ENCODE measurements at regions of chr11 and their contacts with region 1.

Region 1: DNA sequence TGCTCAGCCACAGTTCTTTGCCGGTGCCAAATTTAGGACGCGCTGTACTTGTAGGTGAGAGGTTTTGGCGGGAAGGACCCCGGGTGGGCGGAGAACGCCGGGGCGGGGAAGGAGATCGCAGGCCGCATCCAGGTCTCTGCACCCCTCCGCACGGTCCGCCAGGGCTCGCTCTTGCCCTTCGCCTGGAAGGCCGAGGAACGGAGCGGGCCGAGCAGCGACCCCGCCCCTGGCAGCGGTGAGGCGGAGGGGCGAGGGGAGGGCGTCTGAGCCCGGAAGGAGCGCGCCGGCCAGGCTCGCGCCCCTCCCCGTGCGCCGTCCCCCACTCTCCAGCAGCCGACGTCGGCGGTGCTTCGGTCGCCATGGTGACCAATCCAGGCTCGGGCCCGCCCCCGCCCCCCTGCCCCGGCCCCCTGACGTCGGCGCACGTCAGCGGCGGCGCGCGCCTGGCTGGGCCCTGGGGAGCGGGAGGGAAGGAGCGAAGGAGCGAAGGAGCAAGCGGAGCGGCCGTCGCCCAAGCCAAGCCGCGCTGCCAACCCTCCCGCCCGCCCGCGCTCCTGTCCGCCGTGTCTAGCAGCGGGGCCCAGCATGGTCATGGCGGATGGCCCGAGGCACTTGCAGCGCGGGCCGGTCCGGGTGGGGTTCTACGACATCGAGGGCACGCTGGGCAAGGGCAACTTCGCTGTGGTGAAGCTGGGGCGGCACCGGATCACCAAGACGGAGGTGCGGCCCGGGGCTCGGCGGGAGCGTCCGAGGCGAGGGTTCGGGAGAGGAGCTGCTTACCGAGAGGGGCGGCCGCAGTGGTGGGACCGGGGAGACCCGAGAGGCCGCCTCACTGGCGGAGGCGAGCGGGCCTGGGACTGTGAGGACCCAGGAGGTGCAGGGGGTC is at the start of gene SIK2:
- DNase-seq: peak; percentile 94
- ATAC-seq: peak; percentile 92
- H3K4me3 Mint-ChIP-seq: peak within 1 kb of the TSS; percentile 95
- H3K27ac Mint-ChIP-seq: peak within 1 kb of the TSS; percentile 89
- H3K4me1 Mint-ChIP-seq: peaks cover 29% of the 10 kb centered on the region
- H3K27me3 Mint-ChIP-seq: peaks cover 4% of the 10 kb centered on the region
- total RNA-seq, gene SIK2: 8.9 to 10.2 TPM

Region 2: DNA sequence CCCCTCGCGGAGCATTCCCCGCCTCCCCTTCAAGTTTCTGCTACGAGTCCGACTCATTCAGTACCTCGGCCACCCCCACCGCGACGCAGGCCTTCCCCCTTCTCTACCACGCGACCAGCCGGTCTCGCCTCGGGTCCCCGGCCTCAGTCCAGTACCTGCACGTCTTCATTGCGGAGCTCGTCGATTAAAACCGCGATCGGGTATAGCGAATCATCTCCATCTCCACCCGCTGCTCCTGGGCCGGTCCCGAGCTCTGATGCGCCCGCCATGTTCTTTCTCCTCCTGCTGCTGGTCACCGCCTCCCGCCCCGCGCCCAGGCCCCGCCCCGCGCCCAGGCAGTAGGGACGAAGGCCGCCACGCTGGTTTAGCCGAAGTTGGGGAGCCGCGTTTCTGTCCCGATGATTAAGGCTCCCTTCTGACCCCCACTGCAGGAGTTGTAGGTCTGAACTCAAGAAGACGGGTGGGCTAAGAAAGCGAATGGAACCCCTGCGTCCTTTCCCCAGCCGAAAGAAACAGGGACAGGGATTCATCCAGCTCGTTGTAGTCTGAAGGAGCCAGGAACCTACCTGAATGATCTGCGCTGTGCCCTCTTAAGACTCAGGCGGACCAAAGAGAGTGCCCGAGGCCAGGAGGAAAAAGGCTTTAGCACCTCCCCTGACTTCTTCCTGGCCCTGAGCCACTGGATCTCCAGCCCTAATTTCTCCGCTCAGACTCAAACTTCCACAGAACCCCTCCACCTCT is 164.0 kb after region 1 on chr11 and contains the start of gene PPP2R1B:
- CTCF ChIA-PET with region 1: interaction called, 20 read pairs
- POLR2A ChIA-PET with region 1: interaction called, 3 read pairs
- DNase-seq: peak; percentile 79
- ATAC-seq: peak; percentile 96
- H3K4me3 Mint-ChIP-seq: peak within 1 kb of the TSS; percentile 99
- H3K27ac Mint-ChIP-seq: peak within 1 kb of the TSS; percentile 98
- H3K4me1 Mint-ChIP-seq: peaks cover 27% of the 10 kb centered on the region
- H3K27me3 Mint-ChIP-seq: no peaks in the 10 kb centered on the region
- total RNA-seq, gene PPP2R1B: 56.4 to 57.7 TPM

Region 3: DNA sequence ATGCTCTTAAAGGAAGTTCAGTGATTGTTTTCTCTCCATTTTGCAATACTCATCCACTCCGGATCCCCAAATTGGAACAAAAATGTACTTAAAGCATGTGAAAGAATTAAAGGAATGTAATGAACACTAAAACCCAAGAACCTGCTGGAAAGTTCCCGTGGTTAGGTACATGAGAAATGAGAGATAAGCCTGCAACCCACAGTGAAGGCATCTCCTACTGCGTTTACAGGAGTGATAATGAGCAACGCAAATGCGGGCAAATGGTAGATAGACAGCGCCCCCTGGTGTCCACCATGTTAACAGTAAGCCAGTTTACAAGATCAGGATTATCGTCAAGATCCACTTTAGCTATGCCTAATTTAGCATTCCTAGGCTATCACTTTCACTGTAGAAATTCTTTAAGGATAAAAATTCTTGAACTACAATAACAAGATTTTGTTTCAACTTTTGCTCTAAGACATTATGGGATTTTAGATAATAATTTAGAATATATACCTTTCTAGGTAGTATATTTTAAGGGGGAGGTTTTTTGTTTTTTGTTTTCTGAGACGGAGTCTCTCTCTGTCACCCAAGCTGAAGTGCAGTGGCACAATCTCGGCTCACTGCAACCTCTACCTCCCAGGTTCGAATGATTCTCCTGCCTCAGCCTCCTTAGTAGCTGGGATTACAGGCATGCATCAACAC is 239.3 kb after region 1 on chr11:
- CTCF ChIA-PET with region 1: interaction called, 11 read pairs
- POLR2A ChIA-PET with region 1: interaction called, 3 read pairs
- DNase-seq: peak; percentile 93
- ATAC-seq: peak; percentile 89
- H3K4me3 Mint-ChIP-seq: no peak overlapping the region
- H3K27ac Mint-ChIP-seq: no peak overlapping the region
- H3K4me1 Mint-ChIP-seq: peaks cover 14% of the 10 kb centered on the region
- H3K27me3 Mint-ChIP-seq: no peaks in the 10 kb centered on the region